ENCODE measurements at regions of chr12 and their contacts with region 1.

Region 1: DNA sequence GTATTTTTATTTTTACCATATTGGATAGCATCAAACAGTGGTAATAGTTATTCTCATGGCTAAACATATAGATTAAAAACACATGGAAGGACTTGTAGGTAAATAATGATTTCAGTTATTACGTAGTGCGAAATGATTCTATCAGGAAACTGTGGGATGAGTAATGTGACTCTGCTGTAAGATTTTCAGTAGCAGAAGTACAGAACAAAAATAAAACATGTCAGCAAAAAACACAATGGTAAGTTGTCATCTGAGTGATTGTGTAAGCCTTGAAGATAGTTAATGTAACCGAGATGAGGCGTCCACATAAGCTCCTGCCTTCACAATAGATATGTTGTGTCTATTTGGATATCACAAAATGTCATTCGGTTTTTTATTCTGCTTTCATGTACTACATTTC is 99.8 kb downstream of the BORCS5 start:
- DNase-seq: no peak
- ATAC-seq: peak; percentile 55
- H3K4me3 Mint-ChIP-seq: no peak overlapping the region
- H3K27ac Mint-ChIP-seq: peak overlapping the region; percentile 82
- H3K4me1 Mint-ChIP-seq: peaks cover 40% of the 10 kb centered on the region
- H3K27me3 Mint-ChIP-seq: no peaks in the 10 kb centered on the region
- CTCF ChIP-seq: no peak

Region 2: DNA sequence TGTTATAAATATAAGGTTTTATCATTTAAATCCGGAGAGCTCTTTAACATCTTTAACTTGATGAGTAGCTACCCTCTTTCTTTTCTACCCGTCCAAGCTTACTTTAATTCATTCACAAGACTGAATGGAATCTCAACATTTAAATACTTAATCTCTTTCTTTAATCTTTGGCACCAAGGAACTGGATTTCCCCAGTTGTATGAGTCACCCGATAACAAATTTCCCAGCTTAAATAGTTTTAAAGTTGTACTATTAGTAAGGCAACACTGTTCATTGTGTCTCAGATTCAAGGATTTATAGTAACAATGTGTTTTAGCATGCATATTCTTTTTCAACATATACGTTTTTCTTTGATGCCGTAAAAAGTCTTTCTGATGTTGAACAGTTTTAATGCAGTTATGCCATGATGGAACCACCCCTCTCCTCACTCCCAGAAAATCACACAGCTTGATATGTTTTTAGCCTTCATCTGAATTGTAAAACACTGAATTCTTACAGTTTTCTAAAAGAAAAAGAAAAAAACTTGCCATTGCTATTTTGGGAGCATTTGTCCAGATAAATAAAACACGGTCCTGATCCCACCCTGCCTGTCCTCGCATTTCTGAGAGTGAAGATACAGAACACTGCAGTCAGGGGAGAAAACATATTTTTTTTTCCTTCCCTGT is 173.7 kb before region 1 on chr12:
- CTCF ChIA-PET with region 1: no interaction called
- POLR2A ChIA-PET with region 1: no interaction called
- intact Hi-C with region 1: no loop called
- DNase-seq: no peak
- ATAC-seq: no peak
- H3K4me3 Mint-ChIP-seq: no peak overlapping the region
- H3K27ac Mint-ChIP-seq: no peak overlapping the region
- H3K4me1 Mint-ChIP-seq: no peaks in the 10 kb centered on the region
- H3K27me3 Mint-ChIP-seq: peaks cover 8% of the 10 kb centered on the region
- CTCF ChIP-seq: no peak

Region 3: GRCh38 chr12:12442548-12443071 is 14.0 kb before region 1 on chr12:
- CTCF ChIA-PET with region 1: interaction called, 20 read pairs
- POLR2A ChIA-PET with region 1: interaction called, 13 read pairs
- intact Hi-C with region 1: no loop called
- DNase-seq: no peak
- ATAC-seq: peak; percentile 15
- H3K4me3 Mint-ChIP-seq: peak overlapping the region; percentile 45
- H3K27ac Mint-ChIP-seq: peak overlapping the region; percentile 96
- H3K4me1 Mint-ChIP-seq: peaks cover 62% of the 10 kb centered on the region
- H3K27me3 Mint-ChIP-seq: no peaks in the 10 kb centered on the region
- CTCF ChIP-seq: no peak

Region 4: DNA sequence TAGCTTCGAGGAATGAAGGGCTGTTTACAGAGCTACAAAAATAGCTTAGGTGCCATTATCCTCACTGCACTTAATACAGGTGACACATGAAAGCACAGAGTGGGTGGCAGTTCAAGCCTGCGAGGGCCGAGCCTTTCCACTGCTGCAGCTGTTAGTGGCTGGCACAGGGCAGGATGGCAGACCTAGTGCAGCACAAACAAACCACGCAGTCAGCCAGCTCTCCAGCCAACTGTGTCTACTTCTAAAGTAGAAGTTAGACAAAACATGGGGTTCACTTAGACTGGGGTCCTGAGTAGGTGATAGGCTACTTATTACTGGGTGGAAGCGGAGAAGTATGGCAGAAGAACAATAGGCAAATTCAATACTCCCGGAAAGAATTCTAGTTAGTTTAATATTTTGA is 10.6 kb after region 1 on chr12:
- CTCF ChIA-PET with region 1: interaction called, 10 read pairs
- POLR2A ChIA-PET with region 1: interaction called, 4 read pairs
- intact Hi-C with region 1: no loop called
- DNase-seq: peak; percentile 68
- ATAC-seq: peak; percentile 73
- H3K4me3 Mint-ChIP-seq: no peak overlapping the region
- H3K27ac Mint-ChIP-seq: peak overlapping the region; percentile 87
- H3K4me1 Mint-ChIP-seq: peaks cover 70% of the 10 kb centered on the region
- H3K27me3 Mint-ChIP-seq: no peaks in the 10 kb centered on the region
- CTCF ChIP-seq: no peak

Region 5: DNA sequence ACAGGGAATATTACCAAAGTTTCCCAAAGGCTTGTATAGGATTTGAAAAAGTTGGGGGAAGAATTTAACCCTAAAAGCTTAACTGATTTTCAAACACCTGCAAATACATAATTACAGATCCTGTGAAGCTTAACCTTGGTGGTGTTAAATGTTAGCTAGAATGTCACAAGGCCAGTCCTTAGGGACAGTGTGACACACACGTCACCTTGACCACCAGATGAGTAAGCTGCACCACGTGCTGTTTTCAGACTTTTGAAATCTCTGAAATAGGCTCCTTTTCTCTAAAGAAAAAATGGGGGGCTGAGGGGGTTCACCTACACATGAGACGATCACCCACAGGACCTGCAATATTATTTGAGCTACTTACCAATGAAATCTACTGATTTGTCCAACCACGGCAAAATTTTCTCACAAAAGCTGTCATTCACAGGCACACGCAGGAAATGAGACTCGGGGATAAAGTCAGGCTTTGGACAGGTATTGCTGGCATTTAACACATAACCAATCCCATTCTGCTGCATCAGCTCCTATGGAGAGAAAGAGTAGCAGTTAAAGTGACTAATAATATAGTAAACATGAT is 30.1 kb after region 1 on chr12:
- CTCF ChIA-PET with region 1: no interaction called
- POLR2A ChIA-PET with region 1: no interaction called
- intact Hi-C with region 1: no loop called
- DNase-seq: peak; percentile 59
- ATAC-seq: peak; percentile 64
- H3K4me3 Mint-ChIP-seq: no peak overlapping the region
- H3K27ac Mint-ChIP-seq: peak overlapping the region; percentile 80
- H3K4me1 Mint-ChIP-seq: peaks cover 46% of the 10 kb centered on the region
- H3K27me3 Mint-ChIP-seq: no peaks in the 10 kb centered on the region
- CTCF ChIP-seq: no peak

Region 6: GRCh38 chr12:12872139-12872881 is 415.7 kb after region 1 on chr12:
- CTCF ChIA-PET with region 1: no interaction called
- POLR2A ChIA-PET with region 1: no interaction called
- intact Hi-C with region 1: no loop called
- DNase-seq: no peak
- ATAC-seq: no peak
- H3K4me3 Mint-ChIP-seq: no peak overlapping the region
- H3K27ac Mint-ChIP-seq: no peak overlapping the region
- H3K4me1 Mint-ChIP-seq: no peaks in the 10 kb centered on the region
- H3K27me3 Mint-ChIP-seq: no peaks in the 10 kb centered on the region
- CTCF ChIP-seq: no peak